Activated CD4-positive, alpha-beta T cell treated with anti-CD3 and anti-CD28 coated beads for 36 hours (primary cell): ENCODE measurements at regions of chr3 and their contacts with region 1.

Region 1: DNA sequence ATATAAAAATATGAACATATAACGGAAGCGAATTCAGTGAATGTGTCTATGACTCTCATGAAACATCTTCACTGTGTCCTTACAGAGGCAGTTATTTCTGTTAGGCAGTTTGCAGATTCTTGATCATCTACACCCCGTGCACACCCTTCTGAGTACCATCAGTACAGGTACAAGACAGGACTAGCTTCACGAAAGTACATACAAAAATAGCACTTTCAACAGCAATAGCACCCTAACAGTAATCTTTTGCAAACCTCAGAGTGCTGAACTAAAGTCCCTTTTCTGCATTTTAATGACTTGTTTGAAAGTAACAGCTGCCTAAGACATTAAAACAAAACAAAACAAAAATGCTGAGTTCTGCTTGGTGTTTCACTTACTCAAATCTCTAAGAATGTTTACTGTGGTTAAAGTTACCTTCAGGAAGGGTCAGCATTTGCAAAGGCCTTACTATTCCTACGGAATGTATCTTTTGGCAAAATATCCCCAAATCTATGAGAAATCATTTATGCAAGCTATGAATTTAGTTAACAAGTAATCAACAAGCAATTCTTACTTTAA is 104.1 kb downstream of the CNTN3 start:
- DNase-seq: no peak
- ATAC-seq: no peak
- H3K4me3 Mint-ChIP-seq: no peak overlapping the region
- H3K27ac Mint-ChIP-seq: no peak overlapping the region
- H3K4me1 Mint-ChIP-seq: no peaks in the 10 kb centered on the region
- H3K27me3 Mint-ChIP-seq: no peaks in the 10 kb centered on the region

Region 2: GRCh38 chr3:74149466-74149865 is 360.9 kb before region 1 on chr3:
- CTCF ChIA-PET with region 1: no interaction called
- POLR2A ChIA-PET with region 1: no interaction called
- intact Hi-C with region 1: no loop called
- DNase-seq: no peak
- ATAC-seq: no peak
- H3K4me3 Mint-ChIP-seq: no peak overlapping the region
- H3K27ac Mint-ChIP-seq: no peak overlapping the region
- H3K4me1 Mint-ChIP-seq: no peaks in the 10 kb centered on the region
- H3K27me3 Mint-ChIP-seq: no peaks in the 10 kb centered on the region

Region 3: DNA sequence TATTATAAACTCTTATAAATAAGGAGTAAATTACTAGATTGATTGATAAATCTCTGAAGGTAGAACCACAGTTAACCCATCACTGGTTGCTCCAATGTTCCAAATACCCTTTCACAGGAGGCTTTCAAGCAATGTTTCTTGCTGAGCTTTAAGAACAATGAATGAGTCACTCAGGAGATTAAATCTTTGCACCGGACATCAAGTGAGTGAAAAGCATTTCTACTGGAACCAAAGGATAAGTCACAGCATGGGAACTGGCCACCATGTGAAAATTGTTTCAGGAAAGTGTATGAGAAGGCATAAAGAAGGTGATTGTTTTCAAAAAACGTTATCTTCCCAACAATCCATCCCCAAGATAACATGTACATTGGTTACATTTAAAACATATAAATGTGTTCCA is 13.5 kb after region 1 on chr3:
- CTCF ChIA-PET with region 1: no interaction called
- POLR2A ChIA-PET with region 1: no interaction called
- intact Hi-C with region 1: no loop called
- DNase-seq: no peak
- ATAC-seq: no peak
- H3K4me3 Mint-ChIP-seq: no peak overlapping the region
- H3K27ac Mint-ChIP-seq: no peak overlapping the region
- H3K4me1 Mint-ChIP-seq: no peaks in the 10 kb centered on the region
- H3K27me3 Mint-ChIP-seq: no peaks in the 10 kb centered on the region

Region 4: DNA sequence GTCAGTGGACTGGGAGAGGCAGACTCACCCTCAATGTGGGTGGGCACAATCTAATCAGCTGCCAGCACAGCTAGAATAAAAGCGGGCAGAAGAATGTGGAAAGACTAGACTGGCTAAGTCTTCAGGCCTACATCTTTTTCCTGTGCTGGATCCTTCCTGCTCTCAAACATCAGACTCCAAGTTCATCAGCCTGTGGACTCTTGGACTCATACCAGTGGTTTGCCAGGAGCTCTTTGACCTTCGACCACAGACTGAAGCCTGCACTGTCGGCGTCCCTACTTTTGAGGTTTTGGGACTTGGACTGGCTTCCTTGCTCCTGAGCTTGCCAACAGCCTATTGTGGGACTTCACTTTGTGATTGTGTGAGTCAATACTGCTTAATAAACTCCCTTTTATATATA is 36.1 kb after region 1 on chr3:
- CTCF ChIA-PET with region 1: no interaction called
- POLR2A ChIA-PET with region 1: no interaction called
- intact Hi-C with region 1: no loop called
- DNase-seq: no peak
- ATAC-seq: no peak
- H3K4me3 Mint-ChIP-seq: no peak overlapping the region
- H3K27ac Mint-ChIP-seq: no peak overlapping the region
- H3K4me1 Mint-ChIP-seq: no peaks in the 10 kb centered on the region
- H3K27me3 Mint-ChIP-seq: no peaks in the 10 kb centered on the region

Region 5: DNA sequence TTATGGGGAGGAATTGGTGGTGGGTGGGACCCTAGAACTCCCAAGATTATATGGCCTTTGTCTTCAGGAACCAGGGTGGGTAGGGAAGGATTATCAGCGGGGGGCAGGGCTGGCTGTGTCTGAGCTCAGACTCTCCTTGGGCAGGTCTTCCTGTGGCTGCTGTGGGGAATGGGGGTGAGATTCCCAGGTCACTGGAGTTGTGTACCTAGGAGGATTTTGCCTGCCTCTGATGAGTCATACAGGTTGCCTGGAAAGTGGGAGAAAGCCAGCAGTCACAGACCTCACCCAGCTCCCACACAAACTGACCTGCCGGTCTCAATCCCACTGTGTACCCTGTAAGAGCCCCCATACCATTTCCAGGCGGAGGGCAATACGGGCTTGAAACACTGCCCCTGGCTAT is 314.0 kb after region 1 on chr3:
- CTCF ChIA-PET with region 1: no interaction called
- POLR2A ChIA-PET with region 1: no interaction called
- intact Hi-C with region 1: no loop called
- DNase-seq: no peak
- ATAC-seq: no peak
- H3K4me3 Mint-ChIP-seq: no peak overlapping the region
- H3K27ac Mint-ChIP-seq: no peak overlapping the region
- H3K4me1 Mint-ChIP-seq: no peaks in the 10 kb centered on the region
- H3K27me3 Mint-ChIP-seq: no peaks in the 10 kb centered on the region

Region 6: DNA sequence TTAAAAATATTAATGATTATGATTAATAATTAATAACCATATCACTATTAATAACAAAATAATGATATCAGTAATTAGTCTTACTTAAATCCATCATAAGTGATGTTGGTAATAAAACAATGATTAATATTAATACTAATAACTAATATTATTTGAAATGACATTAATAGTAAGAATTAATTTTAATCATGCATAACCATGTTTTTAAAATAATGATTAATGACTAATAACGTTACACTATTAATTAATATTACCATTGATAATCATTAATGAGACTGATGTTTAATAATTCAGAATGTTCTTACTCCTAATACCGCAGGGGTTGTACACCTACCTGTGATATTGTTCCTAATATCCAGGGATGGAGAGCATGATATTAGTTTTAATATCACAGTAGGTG is 1100.4 kb after region 1 on chr3:
- CTCF ChIA-PET with region 1: no interaction called
- POLR2A ChIA-PET with region 1: no interaction called
- intact Hi-C with region 1: loop called in 1 of 2 experiments (anchors 5 kb)
- DNase-seq: no peak
- ATAC-seq: no peak
- H3K4me3 Mint-ChIP-seq: no peak overlapping the region
- H3K27ac Mint-ChIP-seq: no peak overlapping the region
- H3K4me1 Mint-ChIP-seq: no peaks in the 10 kb centered on the region
- H3K27me3 Mint-ChIP-seq: peaks cover 10% of the 10 kb centered on the region